ACHN (cell line): ENCODE measurements at regions of chr5 and their contacts with region 1.

Region 1: GRCh38 chr5:73902327-73903051 is 276.5 kb downstream of the ARHGEF28 start:
- DNase-seq: peak; percentile 56

Region 2: GRCh38 chr5:73733219-73733618 is 169.3 kb before region 1 on chr5:
- in situ Hi-C with region 1: no loop called
- DNase-seq: no peak

Region 3: GRCh38 chr5:73748510-73749400 is 153.7 kb before region 1 on chr5:
- in situ Hi-C with region 1: no loop called
- DNase-seq: no peak

Region 4: DNA sequence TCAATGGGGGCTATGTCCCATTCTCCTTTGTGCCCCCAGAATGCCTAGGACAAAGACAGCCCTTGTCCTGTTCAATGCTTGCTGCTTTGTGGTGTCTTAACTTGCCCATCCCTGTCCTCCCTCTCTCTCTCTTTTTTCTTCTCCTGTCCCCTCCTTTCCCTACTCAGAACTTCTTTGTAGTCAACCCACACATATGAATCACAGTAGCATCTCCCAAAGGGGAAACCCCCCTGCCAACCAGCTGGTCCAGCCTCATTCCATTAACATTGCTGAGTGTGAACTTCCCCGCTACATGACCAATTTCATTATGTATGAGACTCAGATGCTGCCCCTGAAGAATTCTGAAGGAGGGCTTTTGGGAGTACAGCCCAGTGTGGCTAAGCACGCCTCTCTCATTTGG is 329.8 kb after region 1 on chr5:
- in situ Hi-C with region 1: no loop called
- DNase-seq: peak; percentile 23

Region 5: GRCh38 chr5:74673011-74673790 is 770.7 kb after region 1 on chr5:
- in situ Hi-C with region 1: loop called (anchors 25 kb)
- DNase-seq: peak; percentile 41